Breast epithelium (tissue), 4 donors: ENCODE measurements at regions of chrX and their contacts with region 1.

Region 1: DNA sequence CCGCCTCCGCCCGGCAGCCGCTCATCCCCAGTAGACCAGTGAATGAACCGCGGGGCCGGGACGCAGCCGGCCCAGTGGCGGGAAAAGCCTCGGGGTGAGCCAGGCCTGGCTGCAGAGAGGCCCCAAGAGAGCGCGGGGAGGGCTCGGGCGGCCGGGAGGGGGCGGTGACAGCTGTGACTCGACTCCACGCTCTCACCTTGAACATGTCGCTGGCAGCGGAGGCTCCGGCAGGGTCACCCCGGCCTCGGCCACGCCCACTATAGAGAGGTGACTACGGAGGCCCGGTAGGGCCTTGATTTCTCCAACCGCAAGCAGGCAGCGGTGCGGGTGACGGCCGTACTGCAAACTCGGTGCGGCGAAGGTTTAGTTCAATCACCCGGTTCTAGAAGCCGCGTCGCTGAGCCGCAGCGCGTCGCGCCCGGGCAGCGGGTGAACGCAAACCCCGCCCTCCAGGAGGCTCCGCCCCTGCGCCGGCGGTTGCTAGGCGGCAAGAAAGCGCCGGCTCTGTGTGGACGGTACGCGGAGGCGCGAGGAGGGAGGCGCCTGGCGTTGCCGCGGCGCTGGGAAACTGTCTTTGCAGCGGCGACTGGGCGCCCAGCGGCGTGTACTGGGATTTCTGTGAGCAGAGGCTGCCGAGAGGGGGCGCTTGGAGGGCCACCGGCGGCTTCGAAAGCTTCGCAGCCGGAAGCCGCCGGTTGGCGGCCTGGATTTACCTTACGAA is at the starts of genes APOO and CXorf58:
- DNase-seq: peak; percentile 85
- H3K4me3 ChIP-seq: peak within 1 kb of the TSS; percentile 54 to 63 (median 62)
- H3K27ac ChIP-seq: peak within 1 kb of the TSS; percentile 88 to 89
- H3K4me1 ChIP-seq: no peaks in the 10 kb centered on the region
- H3K27me3 ChIP-seq: peaks cover 0 to 37% of the 10 kb centered on the region in 2 donors
- CTCF ChIP-seq: peak; percentile 66 to 86 (median 77)
- POLR2A ChIP-seq: no peak
- total RNA-seq, gene APOO: 5.8 to 16.7 (median 16.1) TPM
- total RNA-seq, gene CXorf58: 1.5 TPM in 1 of 3 donors, not detected in the others

Region 2: GRCh38 chrX:23694606-23695005 is 213.1 kb before region 1 on chrX:
- intact Hi-C with region 1: loop called (anchors 10 kb)
- DNase-seq: no peak
- H3K4me3 ChIP-seq: no peak overlapping the region
- H3K27ac ChIP-seq: no peak overlapping the region
- H3K4me1 ChIP-seq: no peaks in the 10 kb centered on the region
- H3K27me3 ChIP-seq: peaks cover 0 to 8% of the 10 kb centered on the region in 2 donors
- CTCF ChIP-seq: no peak
- POLR2A ChIP-seq: no peak

Region 3: DNA sequence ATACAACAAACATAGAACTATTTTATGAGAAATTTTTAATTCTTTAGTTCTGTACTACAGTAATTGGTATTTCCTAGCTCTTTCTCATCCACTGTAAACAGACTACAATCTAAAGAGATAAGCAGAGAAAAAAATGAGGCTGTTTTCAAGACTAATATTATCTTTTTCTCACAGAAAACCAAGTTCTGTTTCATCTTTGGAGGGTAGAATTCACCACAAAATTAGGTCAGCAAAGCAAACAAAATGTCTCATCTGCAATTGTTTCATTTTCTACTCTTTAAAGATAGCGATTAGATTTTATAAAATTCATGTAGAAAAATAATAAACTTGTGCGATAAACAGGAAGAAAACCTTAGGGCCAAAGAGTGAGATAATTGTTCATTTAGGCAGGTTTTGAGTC is 10.7 kb before region 1 on chrX:
- intact Hi-C with region 1: no loop called
- DNase-seq: no peak
- H3K4me3 ChIP-seq: no peak overlapping the region
- H3K27ac ChIP-seq: no peak overlapping the region
- H3K4me1 ChIP-seq: no peaks in the 10 kb centered on the region
- H3K27me3 ChIP-seq: peaks cover 0 to 10% of the 10 kb centered on the region in 2 donors
- CTCF ChIP-seq: no peak
- POLR2A ChIP-seq: no peak

Region 4: DNA sequence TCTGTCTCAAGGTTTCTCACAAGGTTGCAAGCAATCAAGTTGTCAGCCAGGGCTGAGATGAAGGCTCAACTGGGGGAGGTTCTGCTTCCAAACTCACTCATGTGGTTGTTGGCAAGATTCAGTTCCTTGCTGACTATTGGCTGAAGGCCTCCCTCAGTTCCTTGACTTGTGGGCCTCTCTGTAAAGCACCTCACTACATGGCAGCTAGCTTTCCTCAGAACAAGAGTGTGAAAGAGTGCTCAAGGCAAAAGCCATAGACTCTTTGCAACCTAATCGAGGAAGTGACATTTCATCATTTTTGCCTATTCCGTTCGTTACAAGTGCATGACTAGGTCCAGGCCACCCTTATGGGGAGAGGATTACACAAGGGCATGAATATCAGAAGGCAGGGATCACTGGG is 52.1 kb after region 1 on chrX:
- intact Hi-C with region 1: no loop called
- DNase-seq: no peak
- H3K4me3 ChIP-seq: no peak overlapping the region
- H3K27ac ChIP-seq: no peak overlapping the region
- H3K4me1 ChIP-seq: no peaks in the 10 kb centered on the region
- H3K27me3 ChIP-seq: peaks cover 0 to 6% of the 10 kb centered on the region in 2 donors
- CTCF ChIP-seq: no peak
- POLR2A ChIP-seq: no peak

Region 5: GRCh38 chrX:24024819-24025740 is 117.4 kb after region 1 on chrX:
- intact Hi-C with region 1: loop called (anchors 5 kb)
- DNase-seq: peak; percentile 74 to 81
- H3K4me3 ChIP-seq: peak overlapping the region; percentile 72 to 74 (median 74)
- H3K27ac ChIP-seq: peak overlapping the region; percentile 95 to 99
- H3K4me1 ChIP-seq: no peaks in the 10 kb centered on the region
- H3K27me3 ChIP-seq: peaks cover 0 to 34% of the 10 kb centered on the region in 2 donors
- CTCF ChIP-seq: no peak
- POLR2A ChIP-seq: peak; percentile 29